Mammary epithelial cell (primary cell): ENCODE measurements at regions of chr1 and their contacts with region 1.

Region 1: GRCh38 chr1:180533266-180533987 is 25.3 kb upstream of the OVAAL start:
- DNase-seq: peak; percentile 33
- H3K4me3 ChIP-seq: no peak overlapping the region
- H3K27ac ChIP-seq: no peak overlapping the region
- H3K4me1 ChIP-seq: peaks cover 15% of the 10 kb centered on the region
- H3K27me3 ChIP-seq: no peaks in the 10 kb centered on the region
- CTCF ChIP-seq: peak; percentile 43 to 64

Region 2: GRCh38 chr1:180548686-180549317 is 15.4 kb after region 1 on chr1:
- CTCF ChIA-PET with region 1: no interaction called
- dilution Hi-C with region 1: no loop called
- in situ Hi-C with region 1: no loop called
- intact Hi-C with region 1: no loop called
- DNase-seq: no peak
- H3K4me3 ChIP-seq: no peak overlapping the region
- H3K27ac ChIP-seq: no peak overlapping the region
- H3K4me1 ChIP-seq: no peaks in the 10 kb centered on the region
- H3K27me3 ChIP-seq: no peaks in the 10 kb centered on the region
- CTCF ChIP-seq: no peak

Region 3: GRCh38 chr1:180623579-180624347 is 90.3 kb after region 1 on chr1:
- CTCF ChIA-PET with region 1: no interaction called
- dilution Hi-C with region 1: no loop called
- in situ Hi-C with region 1: loop called in 1 of 2 experiments (anchors 5 kb)
- intact Hi-C with region 1: no loop called
- DNase-seq: no peak
- H3K4me3 ChIP-seq: no peak overlapping the region
- H3K27ac ChIP-seq: no peak overlapping the region
- H3K4me1 ChIP-seq: no peaks in the 10 kb centered on the region
- H3K27me3 ChIP-seq: no peaks in the 10 kb centered on the region
- CTCF ChIP-seq: peak in 1 of 2 donors; percentile 23

Region 4: DNA sequence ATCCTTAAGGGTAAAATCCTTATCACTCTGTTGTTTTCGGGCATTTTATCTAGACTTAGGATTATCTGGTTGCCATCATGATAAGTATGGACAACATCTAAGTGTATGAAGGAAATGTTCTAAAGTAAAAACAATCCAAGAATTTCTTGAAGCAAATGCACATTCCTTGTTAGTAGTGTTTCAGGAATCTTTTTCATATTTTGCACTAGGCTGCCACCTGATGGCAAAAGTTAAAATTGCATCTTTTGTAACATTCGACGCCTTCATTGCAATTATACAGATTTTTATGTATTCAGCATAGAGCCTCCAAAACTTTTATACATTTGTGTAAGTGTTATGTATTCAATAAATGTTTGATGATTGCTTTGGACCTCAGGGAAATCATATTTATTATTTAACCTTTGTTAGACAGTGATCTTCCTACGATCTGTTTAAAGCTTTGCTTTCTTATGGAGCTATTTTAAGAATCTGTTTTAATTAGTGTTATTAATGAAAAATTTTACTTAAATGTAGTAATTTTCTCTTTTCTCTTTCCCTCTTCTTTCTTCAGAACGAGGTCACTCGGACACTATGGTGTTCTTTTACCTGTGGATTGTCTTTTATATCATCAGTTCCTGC is 329.8 kb after region 1 on chr1:
- CTCF ChIA-PET with region 1: no interaction called
- dilution Hi-C with region 1: no loop called
- in situ Hi-C with region 1: no loop called
- intact Hi-C with region 1: loop called (anchors 5 kb)
- DNase-seq: peak; percentile 32
- H3K4me3 ChIP-seq: no peak overlapping the region
- H3K27ac ChIP-seq: no peak overlapping the region
- H3K4me1 ChIP-seq: peaks cover 9% of the 10 kb centered on the region
- H3K27me3 ChIP-seq: no peaks in the 10 kb centered on the region
- CTCF ChIP-seq: peak; percentile 51 to 62